Esophagus muscularis mucosa (tissue), 4 donors: ENCODE measurements at regions of chr6 and their contacts with region 1.

Region 1: DNA sequence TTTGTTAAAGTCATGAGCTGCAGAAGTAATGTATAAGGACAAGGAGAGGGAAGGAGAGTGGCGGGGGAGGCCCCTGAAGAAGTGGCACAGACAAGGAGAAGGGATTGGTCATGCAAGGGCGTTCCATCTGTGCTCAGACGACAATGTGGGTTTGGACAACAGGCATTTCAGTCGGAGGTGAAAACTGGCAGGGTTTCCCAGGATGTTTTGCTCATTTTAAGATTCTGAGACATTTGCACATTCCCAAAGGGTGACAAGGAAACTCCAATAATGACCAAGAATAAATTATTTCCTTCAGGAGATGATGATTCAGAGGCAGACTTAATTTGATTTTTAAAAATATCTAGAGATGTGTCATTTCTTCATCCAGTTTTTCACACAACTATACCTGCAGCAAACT is 181.8 kb downstream of the HIVEP2 start:
- DNase-seq: no peak
- H3K4me3 ChIP-seq: no peak overlapping the region
- H3K27ac ChIP-seq: no peak overlapping the region
- H3K4me1 ChIP-seq: no peaks in the 10 kb centered on the region
- H3K27me3 ChIP-seq: no peaks in the 10 kb centered on the region
- CTCF ChIP-seq: no peak
- EP300 ChIP-seq: no peak
- POLR2A ChIP-seq: no peak

Region 2: DNA sequence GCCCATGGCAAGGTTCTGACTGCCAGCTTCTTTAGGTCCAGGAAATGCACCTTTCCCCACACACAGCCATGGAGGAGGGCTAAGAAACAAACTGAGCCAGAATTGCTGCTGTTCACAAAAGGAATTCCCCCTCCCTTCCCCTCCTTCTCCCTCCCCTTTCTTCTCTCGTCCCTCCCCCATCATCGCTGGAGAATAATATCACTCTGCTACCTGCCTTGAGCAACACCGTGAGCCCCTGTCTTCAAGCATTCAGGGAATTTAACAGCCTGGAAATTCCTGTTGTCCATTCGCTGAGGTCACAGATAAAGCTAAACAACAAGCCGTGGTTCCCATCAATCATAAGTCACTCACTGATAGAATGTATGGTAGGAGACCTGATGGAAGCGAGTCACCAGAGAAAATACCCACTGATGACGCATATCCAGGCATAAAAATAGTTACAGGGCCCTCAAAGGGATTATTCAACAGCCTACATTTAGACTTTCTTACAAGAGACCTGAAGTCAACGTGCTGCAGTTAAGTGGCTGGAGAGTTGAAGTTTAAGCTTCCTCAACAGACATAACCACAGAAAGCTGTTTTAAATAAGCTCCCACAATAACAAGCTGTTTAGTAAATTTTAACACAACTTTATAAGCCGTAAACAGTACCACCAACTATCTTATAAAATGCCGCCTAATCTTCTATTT is 122.1 kb after region 1 on chr6:
- intact Hi-C with region 1: loop called (anchors 5 kb)
- DNase-seq: no peak
- H3K4me3 ChIP-seq: peak overlapping the region; percentile 46 to 55 (median 50)
- H3K27ac ChIP-seq: peak overlapping the region; percentile 54 to 67 (median 58)
- H3K4me1 ChIP-seq: peaks cover 36 to 57% (median 40%) of the 10 kb centered on the region in 4 donors
- H3K27me3 ChIP-seq: no peaks in the 10 kb centered on the region
- CTCF ChIP-seq: no peak
- EP300 ChIP-seq: no peak
- POLR2A ChIP-seq: no peak

Region 3: GRCh38 chr6:143007646-143008045 is 244.4 kb after region 1 on chr6:
- intact Hi-C with region 1: no loop called
- DNase-seq: no peak
- H3K4me3 ChIP-seq: no peak overlapping the region
- H3K27ac ChIP-seq: no peak overlapping the region
- H3K4me1 ChIP-seq: no peaks in the 10 kb centered on the region
- H3K27me3 ChIP-seq: no peaks in the 10 kb centered on the region
- CTCF ChIP-seq: no peak
- EP300 ChIP-seq: no peak
- POLR2A ChIP-seq: no peak